Activated naive CD4-positive, alpha-beta T cell treated with anti-CD3 and anti-CD28 coated beads for 36 hours (primary cell): ENCODE measurements at regions of chr10 and their contacts with region 1.

Region 1: GRCh38 chr10:62816331-62817120 is at the start of gene EGR2:
- DNase-seq: peak; percentile 98
- H3K4me3 Mint-ChIP-seq: peak within 1 kb of the TSS; percentile 95
- H3K27ac Mint-ChIP-seq: peak within 1 kb of the TSS; percentile 98
- H3K4me1 Mint-ChIP-seq: peaks cover 41% of the 10 kb centered on the region
- H3K27me3 Mint-ChIP-seq: peaks cover 14% of the 10 kb centered on the region
- total RNA-seq, gene EGR2: 18.5 to 21.4 TPM

Region 2: DNA sequence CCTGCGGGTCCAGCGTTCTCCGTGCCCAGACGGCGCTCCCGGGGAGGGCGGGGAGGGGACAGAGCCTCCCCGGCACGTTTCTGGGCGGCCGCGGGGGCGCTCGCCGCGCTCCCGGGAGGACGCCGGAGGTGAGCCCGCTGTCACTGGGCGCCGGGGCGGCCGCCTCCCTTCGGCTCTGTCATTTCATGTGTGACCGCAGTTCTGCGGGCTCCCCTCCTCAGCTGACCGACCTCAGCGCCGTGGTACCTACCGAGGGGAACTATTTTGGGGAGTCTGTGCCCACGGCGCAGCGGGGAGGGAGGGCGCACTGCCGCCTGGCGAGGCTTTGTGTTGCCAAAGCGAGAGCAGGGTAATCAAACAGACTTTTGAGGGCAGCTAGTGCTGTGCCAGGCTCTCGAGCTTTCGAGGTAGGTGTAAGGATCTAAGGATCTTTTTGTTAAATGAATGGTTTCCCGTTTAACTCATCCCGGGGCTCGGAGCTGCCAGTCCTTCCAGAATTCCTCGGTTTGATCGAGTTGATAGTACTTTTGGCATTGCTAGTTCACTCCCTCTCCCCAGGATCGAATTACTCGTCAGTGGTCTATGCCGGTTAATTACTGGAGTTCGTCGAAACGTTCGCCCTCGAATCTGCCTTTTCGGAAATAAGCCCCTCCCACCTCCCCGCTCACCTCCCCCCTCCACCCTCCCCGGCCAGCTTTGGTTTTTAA is 913.2 kb before region 1 on chr10:
- CTCF ChIA-PET with region 1: no interaction called
- intact Hi-C with region 1: loop called (anchors 1 kb)
- DNase-seq: peak; percentile 74
- H3K4me3 Mint-ChIP-seq: peak overlapping the region; percentile 99
- H3K27ac Mint-ChIP-seq: peak overlapping the region; percentile 100
- H3K4me1 Mint-ChIP-seq: peaks cover 42% of the 10 kb centered on the region
- H3K27me3 Mint-ChIP-seq: no peaks in the 10 kb centered on the region

Region 3: GRCh38 chr10:62268399-62269114 is 548.0 kb before region 1 on chr10 and contains the start of gene RTKN2:
- CTCF ChIA-PET with region 1: no interaction called
- intact Hi-C with region 1: loop called (anchors 5 kb)
- DNase-seq: peak; percentile 78
- H3K4me3 Mint-ChIP-seq: peak within 1 kb of the TSS; percentile 72
- H3K27ac Mint-ChIP-seq: peak within 1 kb of the TSS; percentile 28
- H3K4me1 Mint-ChIP-seq: peaks cover 23% of the 10 kb centered on the region
- H3K27me3 Mint-ChIP-seq: peaks cover 13% of the 10 kb centered on the region
- total RNA-seq, gene RTKN2: 4.7 to 5.4 TPM

Region 4: GRCh38 chr10:62610649-62611229 is 205.8 kb before region 1 on chr10:
- CTCF ChIA-PET with region 1: interaction called, 49 read pairs
- intact Hi-C with region 1: loop called (anchors 1 kb)
- DNase-seq: peak; percentile 83
- H3K4me3 Mint-ChIP-seq: no peak overlapping the region
- H3K27ac Mint-ChIP-seq: no peak overlapping the region
- H3K4me1 Mint-ChIP-seq: peaks cover 31% of the 10 kb centered on the region
- H3K27me3 Mint-ChIP-seq: peaks cover 5% of the 10 kb centered on the region

Region 5: GRCh38 chr10:62779487-62780248 is 36.9 kb before region 1 on chr10:
- CTCF ChIA-PET with region 1: interaction called, 5 read pairs
- intact Hi-C with region 1: loop called (anchors 1 kb)
- DNase-seq: peak; percentile 94
- H3K4me3 Mint-ChIP-seq: no peak overlapping the region
- H3K27ac Mint-ChIP-seq: peak overlapping the region; percentile 59
- H3K4me1 Mint-ChIP-seq: peaks cover 21% of the 10 kb centered on the region
- H3K27me3 Mint-ChIP-seq: no peaks in the 10 kb centered on the region

Region 6: DNA sequence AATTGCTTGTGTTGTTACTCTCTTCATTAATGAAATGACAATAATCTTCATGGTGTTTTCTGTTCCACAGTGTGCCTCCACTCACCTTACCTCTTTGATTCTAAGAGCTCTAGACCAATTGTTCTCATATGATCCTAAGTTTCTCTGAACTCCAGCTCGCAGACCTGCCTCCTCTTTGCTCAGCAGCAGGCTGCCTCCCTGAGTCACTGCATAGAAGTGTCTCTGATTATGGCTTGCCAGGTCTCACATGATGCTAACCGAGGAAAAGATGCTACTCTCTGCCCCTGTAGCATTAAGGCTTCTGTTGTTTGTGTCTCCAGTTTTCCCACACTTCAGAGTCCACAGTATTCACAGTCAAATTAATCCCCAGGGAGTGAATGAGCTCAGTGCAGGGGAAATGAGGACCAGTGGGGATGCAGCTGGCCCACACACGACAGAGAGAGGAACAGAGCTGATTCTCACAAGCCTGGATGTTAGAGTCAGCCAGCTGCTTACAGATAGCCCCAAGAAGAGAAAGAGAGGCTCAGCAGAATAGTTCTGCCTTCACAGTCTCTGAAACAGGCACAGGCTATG is 145.5 kb after region 1 on chr10:
- CTCF ChIA-PET with region 1: no interaction called
- intact Hi-C with region 1: no loop called
- DNase-seq: no peak
- H3K4me3 Mint-ChIP-seq: no peak overlapping the region
- H3K27ac Mint-ChIP-seq: no peak overlapping the region
- H3K4me1 Mint-ChIP-seq: no peaks in the 10 kb centered on the region
- H3K27me3 Mint-ChIP-seq: peaks cover 27% of the 10 kb centered on the region

Region 7: DNA sequence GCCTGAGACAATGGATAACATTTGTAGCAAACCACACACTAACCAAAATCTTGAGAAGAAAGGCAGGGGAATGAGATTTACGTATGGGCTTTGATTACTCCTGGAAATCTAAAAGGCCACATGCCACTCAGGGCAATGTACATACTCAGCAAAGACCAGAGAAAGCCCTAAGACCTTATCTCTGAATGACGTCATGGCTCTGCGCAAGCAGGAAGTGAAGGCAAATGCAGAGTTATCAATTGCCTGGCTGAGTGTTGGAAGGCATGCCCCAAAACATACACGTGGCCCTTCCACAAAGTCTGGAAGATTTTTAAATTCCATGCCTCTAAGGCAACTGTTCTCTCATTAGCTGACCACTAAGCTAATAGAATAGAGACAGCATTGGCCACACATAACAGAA is 225.7 kb after region 1 on chr10:
- CTCF ChIA-PET with region 1: no interaction called
- intact Hi-C with region 1: no loop called
- DNase-seq: no peak
- H3K4me3 Mint-ChIP-seq: no peak overlapping the region
- H3K27ac Mint-ChIP-seq: no peak overlapping the region
- H3K4me1 Mint-ChIP-seq: peaks cover 3% of the 10 kb centered on the region
- H3K27me3 Mint-ChIP-seq: peaks cover 22% of the 10 kb centered on the region

Region 8: GRCh38 chr10:63133056-63133820 is 316.7 kb after region 1 on chr10 and contains the start of gene NRBF2:
- CTCF ChIA-PET with region 1: no interaction called
- intact Hi-C with region 1: loop called (anchors 1 kb)
- DNase-seq: peak; percentile 98
- H3K4me3 Mint-ChIP-seq: peak within 1 kb of the TSS; percentile 89
- H3K27ac Mint-ChIP-seq: peak within 1 kb of the TSS; percentile 92
- H3K4me1 Mint-ChIP-seq: peaks cover 38% of the 10 kb centered on the region
- H3K27me3 Mint-ChIP-seq: no peaks in the 10 kb centered on the region
- total RNA-seq, gene NRBF2: 15.4 to 15.6 TPM

Region 9: DNA sequence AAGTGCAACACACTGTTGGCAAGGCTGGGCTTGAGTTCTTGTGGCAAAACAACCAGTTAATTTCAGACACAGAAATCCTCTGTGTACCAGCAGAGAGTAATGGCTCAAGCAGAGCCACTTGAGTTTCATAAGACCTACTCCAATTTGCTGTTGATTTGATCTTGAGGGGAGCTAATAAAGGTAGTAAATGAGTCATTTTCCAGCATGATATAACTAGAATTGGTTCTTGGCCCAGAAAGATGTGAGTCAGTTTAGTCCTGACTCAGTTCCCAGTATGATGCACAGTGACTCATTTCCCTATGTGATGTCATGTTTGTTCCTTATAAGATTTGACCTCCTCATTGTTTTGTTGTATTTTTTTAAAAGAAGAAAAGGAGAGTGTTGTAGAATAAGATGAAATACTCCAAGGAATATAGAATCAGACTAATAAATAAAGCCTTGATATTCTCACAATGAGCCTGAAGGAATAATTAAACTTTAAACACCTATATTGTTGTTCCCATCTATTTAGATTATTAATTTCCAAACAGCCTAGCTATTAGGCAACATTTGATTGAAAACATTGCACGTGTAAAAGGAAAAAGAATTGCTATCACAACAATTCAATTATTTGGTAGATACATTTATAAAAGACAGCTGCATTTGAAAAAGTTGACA is 890.9 kb after region 1 on chr10:
- CTCF ChIA-PET with region 1: no interaction called
- intact Hi-C with region 1: loop called (anchors 1 kb)
- DNase-seq: peak; percentile 58
- H3K4me3 Mint-ChIP-seq: no peak overlapping the region
- H3K27ac Mint-ChIP-seq: peak overlapping the region; percentile 27
- H3K4me1 Mint-ChIP-seq: peaks cover 17% of the 10 kb centered on the region
- H3K27me3 Mint-ChIP-seq: no peaks in the 10 kb centered on the region